ENCODE measurements at regions of chr12 and their contacts with region 1.

Region 1: DNA sequence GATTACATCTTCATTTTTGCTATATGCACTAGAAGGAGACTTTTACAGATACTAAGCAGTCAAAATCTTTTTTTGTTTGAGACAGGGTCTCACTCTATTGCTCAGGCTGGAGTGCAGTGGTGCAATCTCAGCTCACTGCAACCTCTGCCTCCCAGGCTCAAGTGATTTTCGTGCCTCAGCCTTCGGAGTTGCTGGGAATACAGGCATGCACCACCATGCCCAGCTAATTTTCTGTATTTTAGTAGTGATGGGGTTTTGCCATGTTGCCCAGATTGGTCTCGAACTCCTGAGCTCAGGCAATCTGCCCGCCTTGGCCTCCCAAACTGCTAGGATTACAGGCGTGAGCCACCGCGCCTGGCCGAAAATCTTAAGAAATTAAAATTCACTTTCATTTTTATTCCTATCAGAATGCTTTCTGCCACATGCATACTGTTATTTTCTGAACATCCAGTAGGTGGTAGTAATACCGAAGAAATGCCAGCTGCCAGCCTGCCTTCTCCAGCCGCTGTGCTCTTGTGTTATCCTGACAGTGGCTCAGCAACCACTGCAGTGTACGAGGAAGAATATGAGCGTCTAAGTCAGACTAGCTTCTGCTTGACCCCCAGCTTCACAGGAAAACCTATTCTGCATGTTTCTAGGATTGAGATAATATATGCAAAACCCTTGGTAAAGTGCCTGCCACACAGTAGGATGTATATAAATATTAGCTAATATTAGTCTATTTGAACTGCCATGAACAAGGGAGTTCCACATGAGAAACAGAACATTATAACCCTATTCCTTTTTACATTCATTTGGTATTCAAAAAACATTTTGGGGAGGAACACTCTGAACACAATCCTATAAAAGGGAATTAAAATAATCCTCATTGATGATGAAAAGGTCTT is 54.2 kb downstream of the RPAP3 start:
- DNase-seq: peak; percentile 70
- ATAC-seq: peak; percentile 93
- H3K4me3 Mint-ChIP-seq: no peak overlapping the region
- H3K27ac Mint-ChIP-seq: peak overlapping the region; percentile 11
- H3K4me1 Mint-ChIP-seq: peaks cover 20% of the 10 kb centered on the region
- H3K27me3 Mint-ChIP-seq: no peaks in the 10 kb centered on the region

Region 2: GRCh38 chr12:47408171-47408871 is 243.3 kb before region 1 on chr12:
- CTCF ChIA-PET with region 1: no interaction called
- POLR2A ChIA-PET with region 1: no interaction called
- intact Hi-C with region 1: no loop called
- DNase-seq: peak; percentile 60
- ATAC-seq: peak; percentile 55
- H3K4me3 Mint-ChIP-seq: no peak overlapping the region
- H3K27ac Mint-ChIP-seq: peak overlapping the region; percentile 52
- H3K4me1 Mint-ChIP-seq: peaks cover 75% of the 10 kb centered on the region
- H3K27me3 Mint-ChIP-seq: no peaks in the 10 kb centered on the region

Region 3: DNA sequence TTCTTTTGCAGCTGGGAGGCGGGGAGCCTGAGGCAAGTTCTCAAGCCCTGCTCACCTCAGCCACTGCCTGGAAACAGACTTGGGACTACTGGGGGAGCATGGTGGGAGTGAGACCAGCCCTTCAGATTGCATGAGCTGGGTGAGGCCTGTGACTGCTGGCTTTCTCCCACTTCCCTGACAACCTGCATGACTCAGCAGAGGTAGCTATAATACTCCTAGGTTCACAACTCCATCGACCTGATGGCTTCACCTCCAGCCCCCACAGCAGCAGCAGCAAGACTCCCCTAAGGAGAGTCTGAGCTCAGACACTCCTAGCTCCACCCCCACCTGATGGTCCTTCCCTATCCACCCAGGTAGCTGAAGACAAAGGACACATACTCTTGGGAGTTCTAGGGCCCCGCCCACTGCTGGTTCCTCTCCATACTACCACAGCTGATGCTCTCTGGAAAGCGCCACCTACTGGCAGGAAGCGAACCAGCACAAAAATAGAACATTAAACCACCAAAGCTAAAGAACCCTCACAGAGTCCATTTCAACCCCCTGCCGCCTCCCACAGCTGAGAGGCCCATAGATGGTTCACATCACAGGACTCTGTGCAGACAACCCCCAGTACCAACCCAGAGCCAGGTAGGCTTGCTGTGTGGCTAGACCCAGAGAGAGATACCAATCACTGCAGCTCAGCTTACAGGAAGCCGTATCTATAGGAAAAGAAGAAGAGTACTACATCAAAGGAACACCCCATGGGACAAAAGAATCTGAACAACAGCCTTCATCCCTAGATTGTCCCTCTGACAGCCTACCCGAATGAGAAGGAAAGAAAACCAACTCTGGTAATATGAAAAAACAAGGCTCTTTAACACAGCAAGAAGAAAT is 14.5 kb before region 1 on chr12:
- CTCF ChIA-PET with region 1: interaction called, 15 read pairs
- POLR2A ChIA-PET with region 1: no interaction called
- intact Hi-C with region 1: no loop called
- DNase-seq: peak; percentile 75
- ATAC-seq: no peak
- H3K4me3 Mint-ChIP-seq: no peak overlapping the region
- H3K27ac Mint-ChIP-seq: no peak overlapping the region
- H3K4me1 Mint-ChIP-seq: peaks cover 8% of the 10 kb centered on the region
- H3K27me3 Mint-ChIP-seq: no peaks in the 10 kb centered on the region

Region 4: GRCh38 chr12:47672068-47672467 is 20.5 kb after region 1 on chr12:
- CTCF ChIA-PET with region 1: interaction called, 49 read pairs
- POLR2A ChIA-PET with region 1: no interaction called
- intact Hi-C with region 1: no loop called
- DNase-seq: no peak
- ATAC-seq: peak; percentile 30
- H3K4me3 Mint-ChIP-seq: no peak overlapping the region
- H3K27ac Mint-ChIP-seq: no peak overlapping the region
- H3K4me1 Mint-ChIP-seq: peaks cover 25% of the 10 kb centered on the region
- H3K27me3 Mint-ChIP-seq: no peaks in the 10 kb centered on the region

Region 5: DNA sequence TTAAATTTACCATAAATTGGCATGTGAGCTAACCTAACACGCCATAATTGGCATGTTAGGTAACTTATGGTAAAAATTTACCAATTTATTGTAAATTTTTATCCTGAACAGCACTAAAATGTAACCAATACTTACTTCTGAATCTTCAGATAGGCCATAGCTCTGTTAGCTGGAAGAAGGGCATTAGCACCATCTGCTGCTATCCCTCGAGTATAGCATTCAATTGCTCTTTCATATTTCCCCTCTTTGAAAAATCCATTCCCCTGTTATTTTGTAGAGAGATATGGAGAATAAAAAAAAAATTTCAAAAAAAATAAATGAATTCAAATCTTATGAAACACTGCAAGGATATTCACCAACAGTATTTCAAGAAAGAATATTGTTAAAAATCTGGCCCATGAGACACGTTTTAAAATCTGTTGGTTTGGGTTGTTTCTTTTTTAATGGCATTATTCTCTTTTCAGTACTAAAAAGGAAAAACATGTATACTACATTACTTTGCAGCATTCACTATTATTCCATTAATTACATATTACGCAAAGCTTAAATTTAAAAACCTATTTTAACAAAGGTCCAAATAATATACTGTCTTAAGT is 35.1 kb after region 1 on chr12:
- CTCF ChIA-PET with region 1: interaction called, 23 read pairs
- POLR2A ChIA-PET with region 1: no interaction called
- intact Hi-C with region 1: loop called (anchors 1 kb)
- DNase-seq: peak; percentile 42
- ATAC-seq: no peak
- H3K4me3 Mint-ChIP-seq: no peak overlapping the region
- H3K27ac Mint-ChIP-seq: no peak overlapping the region
- H3K4me1 Mint-ChIP-seq: peaks cover 11% of the 10 kb centered on the region
- H3K27me3 Mint-ChIP-seq: no peaks in the 10 kb centered on the region

Region 6: GRCh38 chr12:47767216-47767724 is 115.7 kb after region 1 on chr12:
- CTCF ChIA-PET with region 1: interaction called, 14 read pairs
- POLR2A ChIA-PET with region 1: no interaction called
- intact Hi-C with region 1: no loop called
- DNase-seq: peak; percentile 88
- ATAC-seq: peak; percentile 89
- H3K4me3 Mint-ChIP-seq: no peak overlapping the region
- H3K27ac Mint-ChIP-seq: no peak overlapping the region
- H3K4me1 Mint-ChIP-seq: no peaks in the 10 kb centered on the region
- H3K27me3 Mint-ChIP-seq: peaks cover 4% of the 10 kb centered on the region

Region 7: DNA sequence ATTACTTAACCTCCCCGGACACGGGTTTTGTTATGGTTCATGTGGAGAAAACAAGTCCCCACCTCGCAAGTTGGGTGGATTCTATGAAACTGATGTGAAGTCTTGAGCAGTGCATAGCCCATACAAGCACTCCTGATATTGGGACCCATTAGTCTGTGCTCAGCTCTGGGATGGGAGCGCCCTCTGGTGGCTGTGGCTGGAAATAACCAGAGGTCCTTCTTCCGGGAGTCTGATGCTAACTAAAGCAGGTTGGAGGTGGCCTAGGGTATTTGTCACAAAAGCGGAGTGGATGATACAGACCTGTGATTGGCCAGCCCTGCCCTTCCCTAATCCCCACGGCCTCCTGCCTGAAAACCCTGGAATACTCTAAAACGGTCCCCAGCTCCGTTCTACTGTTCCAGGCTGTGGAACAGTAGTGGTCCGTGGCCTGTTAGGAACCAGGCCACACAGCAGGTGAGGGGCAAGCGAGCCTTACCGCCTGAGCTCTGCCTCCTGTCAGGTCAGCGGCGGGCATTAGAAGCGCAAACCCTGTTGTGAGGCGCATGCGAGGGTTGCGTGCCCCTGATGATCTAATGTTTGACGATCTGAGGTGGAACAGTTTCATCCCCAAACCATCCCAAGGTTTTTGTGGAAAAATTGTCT is 127.8 kb after region 1 on chr12:
- CTCF ChIA-PET with region 1: no interaction called
- POLR2A ChIA-PET with region 1: no interaction called
- intact Hi-C with region 1: loop called (anchors 1 to 5 kb)
- DNase-seq: peak; percentile 96
- ATAC-seq: peak; percentile 82
- H3K4me3 Mint-ChIP-seq: no peak overlapping the region
- H3K27ac Mint-ChIP-seq: peak overlapping the region; percentile 37
- H3K4me1 Mint-ChIP-seq: peaks cover 29% of the 10 kb centered on the region
- H3K27me3 Mint-ChIP-seq: no peaks in the 10 kb centered on the region